Esophagus squamous epithelium (tissue), 5 donors: ENCODE measurements at regions of chr19 and their contacts with region 1.

Region 1: DNA sequence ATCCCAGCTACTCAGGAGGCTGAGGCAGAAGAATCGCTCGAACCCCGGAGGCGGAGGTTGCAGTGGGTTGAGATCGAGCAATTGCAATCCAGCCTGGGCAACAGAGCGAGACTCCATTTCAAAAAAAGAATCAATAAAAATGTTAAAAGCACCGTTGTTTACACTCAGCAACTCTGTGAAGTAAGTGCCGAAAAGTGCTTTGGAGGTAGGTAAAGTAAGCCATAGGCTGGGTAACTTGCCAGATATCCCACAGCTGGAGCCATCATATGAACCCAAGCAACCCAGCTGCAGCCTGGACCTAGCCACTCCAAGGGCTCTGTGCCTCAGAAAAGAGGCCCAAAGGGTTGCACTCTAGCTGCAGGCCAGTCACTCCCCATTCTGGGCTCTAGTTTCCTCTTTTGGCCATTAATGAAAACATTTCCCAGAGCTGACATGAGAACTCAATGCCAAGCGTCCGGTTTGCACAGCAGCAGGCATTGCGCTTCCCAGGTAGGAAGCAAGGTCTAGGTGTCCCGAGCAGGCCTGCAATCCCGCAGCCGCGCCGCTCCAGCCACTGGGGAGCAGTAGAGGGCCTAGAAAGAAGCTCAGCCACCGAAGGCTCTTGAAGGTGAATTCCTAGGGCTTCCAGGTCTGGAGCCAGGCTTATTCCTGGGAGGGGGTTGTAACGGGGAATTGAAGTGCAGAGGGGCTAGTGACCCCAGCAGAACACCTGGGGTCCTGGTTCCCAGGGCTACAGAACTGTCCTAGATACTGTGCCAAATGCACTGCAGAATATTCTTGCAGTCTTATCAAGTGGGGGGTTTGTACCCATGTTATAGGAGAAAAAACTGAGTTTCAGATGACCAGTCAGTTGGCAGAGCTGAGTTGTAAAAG is 4.1 kb upstream of the CD79A start:
- DNase-seq: no peak
- H3K4me3 ChIP-seq: no peak overlapping the region
- H3K27ac ChIP-seq: peak overlapping the region in 2 of 4 donors; percentile 40 to 46
- H3K4me1 ChIP-seq: peaks cover 0 to 66% (median 10%) of the 10 kb centered on the region in 3 donors
- H3K27me3 ChIP-seq: no peaks in the 10 kb centered on the region
- CTCF ChIP-seq: peak; percentile 39 to 74 (median 68)
- POLR2A ChIP-seq: no peak

Region 2: DNA sequence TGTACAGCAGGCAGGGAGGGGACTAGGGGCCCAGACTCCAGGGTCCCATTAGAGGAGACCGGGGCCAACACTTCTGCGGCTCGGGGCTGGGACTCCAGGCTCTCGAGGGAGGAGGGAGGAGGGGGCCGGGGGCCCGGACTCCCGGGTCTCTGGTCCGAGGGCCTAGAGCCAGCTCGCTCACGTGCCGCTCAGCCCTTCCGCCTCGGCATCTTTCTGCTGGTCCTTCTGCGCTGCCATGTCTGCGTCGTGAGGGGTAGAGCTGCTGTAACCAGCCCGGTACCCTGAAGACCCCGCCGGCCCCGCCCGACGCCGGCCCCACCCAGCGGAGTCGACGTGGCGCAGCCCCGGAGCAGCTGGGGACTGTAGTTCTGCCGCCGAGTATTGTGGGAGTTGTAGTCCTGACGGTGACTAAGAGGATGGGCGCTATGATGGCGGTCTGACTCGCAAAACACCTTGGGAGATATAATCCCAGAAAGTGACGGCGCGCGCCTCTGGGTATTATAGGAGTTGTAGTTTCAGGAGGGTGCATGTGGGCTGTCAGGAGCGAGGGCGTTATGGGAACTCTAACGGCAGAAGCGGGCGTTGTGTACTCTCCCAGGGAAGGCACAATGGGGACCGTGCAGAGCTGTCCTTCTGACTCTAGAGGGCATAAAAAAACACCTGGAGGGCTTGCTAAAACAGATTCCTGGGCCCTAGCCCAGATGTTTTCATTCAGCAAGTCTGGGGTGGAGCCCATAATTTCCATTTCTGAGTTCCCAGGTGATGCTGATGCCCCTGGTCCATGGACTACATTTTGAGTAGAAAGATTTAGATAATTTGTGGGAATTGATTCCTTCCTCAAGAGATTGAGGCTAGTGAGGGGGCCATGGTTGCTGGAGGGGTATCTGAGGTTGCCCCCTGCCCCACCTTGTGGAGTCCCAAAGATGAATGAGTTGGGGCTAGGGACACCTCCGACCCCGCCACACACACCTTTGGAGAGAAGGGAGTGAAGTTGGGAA is 86.3 kb after region 1 on chr19 and contains the start of gene RABAC1:
- intact Hi-C with region 1: loop called (anchors 10 kb)
- DNase-seq: peak; percentile 40
- H3K4me3 ChIP-seq: peak within 1 kb of the TSS; percentile 82 to 95 (median 86)
- H3K27ac ChIP-seq: peak within 1 kb of the TSS; percentile 92 to 98 (median 94)
- H3K4me1 ChIP-seq: peaks cover 11 to 26% (median 11%) of the 10 kb centered on the region in 3 donors
- H3K27me3 ChIP-seq: peaks cover 0 to 2% (median 0%) of the 10 kb centered on the region in 4 donors
- CTCF ChIP-seq: peak in 3 of 6 experiments; percentile 7 to 31 (median 11)
- POLR2A ChIP-seq: peak in 1 of 4 donors; percentile 35
- total RNA-seq, gene RABAC1: 47.4 to 113 (median 103) TPM